ENCODE measurements at regions of chr13 and their contacts with region 1.

Region 1: DNA sequence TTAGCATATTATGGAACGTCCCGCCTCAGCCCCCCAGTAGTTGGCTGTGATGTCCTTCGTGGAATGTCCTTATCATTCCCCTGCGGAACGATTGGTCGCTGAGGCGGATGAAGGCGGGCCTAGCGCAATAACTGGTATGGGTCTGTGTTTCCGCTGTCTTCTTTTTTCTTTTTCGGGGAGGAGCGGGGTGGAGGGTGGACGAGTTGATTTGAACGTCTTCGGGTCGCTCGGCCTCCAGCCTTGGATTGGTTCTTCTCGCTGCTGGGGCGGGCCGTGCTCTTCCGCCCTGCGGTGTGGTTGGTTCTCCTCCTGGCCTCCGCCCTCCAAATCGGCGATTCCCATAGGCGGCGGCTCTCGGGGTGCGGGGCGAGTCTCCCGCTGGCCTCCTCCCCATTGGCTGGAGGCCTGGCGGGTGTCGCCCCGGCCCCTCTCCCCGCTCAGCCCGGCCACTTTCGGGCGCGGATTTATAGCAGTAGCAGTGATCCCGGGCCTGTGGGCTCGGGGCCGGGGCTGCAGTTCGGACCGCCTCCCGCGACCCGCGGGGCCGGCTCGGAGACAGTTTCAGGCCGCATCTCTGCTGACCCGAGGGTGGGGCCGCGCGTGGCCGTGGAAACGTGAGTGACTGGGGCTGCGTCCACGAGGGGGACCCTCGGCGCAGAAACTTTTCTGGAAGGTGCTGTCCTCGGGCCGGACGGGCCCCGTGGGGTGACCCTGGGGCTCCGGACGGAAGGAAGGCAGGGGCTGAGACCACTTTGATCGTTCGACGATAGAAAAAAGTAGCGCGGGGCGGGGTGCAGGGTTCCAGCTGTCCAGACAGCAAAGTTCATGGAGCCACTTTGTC is 2.1 kb downstream of the ING1 start:
- DNase-seq: peak; percentile 100
- H3K4me3 ChIP-seq: peak overlapping the region; percentile 91 to 97 (median 94)
- H3K27ac ChIP-seq: peak overlapping the region; percentile 96 to 100 (median 100)
- H3K4me1 ChIP-seq: peaks cover 0 to 39% (median 31%) of the 10 kb centered on the region in 4 donors
- H3K27me3 ChIP-seq: no peaks in the 10 kb centered on the region
- CTCF ChIP-seq: peak in 2 of 4 experiments; percentile 14 to 23
- EP300 ChIP-seq: peak in 2 of 4 donors; percentile 45 to 50
- POLR2A ChIP-seq: peak; percentile 91 to 95

Region 2: DNA sequence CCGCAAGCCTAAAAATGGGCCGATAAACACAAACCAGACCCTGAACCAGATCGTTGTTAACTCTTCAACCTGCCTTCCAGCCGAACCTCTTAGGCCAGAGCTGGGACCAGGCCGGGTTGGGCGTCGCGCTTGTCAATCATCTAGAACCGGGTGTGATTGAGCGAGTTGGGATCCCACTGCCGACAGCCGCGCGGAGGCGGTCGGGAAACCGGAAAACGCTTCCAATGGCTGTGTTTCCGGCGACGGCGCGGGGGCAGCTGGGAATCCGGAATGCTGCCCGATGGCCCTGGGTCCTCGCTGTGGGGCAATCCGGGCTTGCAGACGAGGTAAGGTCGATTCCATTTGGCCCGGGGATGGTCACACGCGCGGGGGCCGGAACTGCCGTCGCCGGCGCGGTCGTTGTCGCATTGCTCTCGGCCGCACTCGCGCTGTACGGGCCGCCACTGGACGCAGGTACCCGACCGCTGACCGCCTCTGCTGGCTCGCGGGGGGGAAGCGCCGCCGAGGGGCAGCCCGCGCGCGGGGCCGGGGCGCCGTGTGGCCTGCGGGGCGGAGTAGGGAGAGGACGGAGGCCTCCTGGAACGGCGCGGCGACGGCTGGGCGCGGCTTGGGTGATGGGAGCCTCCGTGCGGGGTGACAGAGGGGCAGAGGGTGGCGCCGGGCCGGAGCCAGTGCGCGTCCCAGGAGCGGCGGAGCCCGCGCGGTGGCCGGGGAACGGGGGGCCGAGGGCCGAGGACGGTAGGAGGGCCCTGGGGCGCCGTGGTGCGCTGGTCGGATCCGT is 100.1 kb before region 1 on chr13 and contains the start of gene NAXD:
- intact Hi-C with region 1: loop called (anchors 1 kb)
- DNase-seq: peak; percentile 97
- H3K4me3 ChIP-seq: peak within 1 kb of the TSS; percentile 80 to 93 (median 81)
- H3K27ac ChIP-seq: peak within 1 kb of the TSS; percentile 94 to 97 (median 96)
- H3K4me1 ChIP-seq: peaks cover 0 to 50% (median 46%) of the 10 kb centered on the region in 4 donors
- H3K27me3 ChIP-seq: no peaks in the 10 kb centered on the region
- CTCF ChIP-seq: no peak
- EP300 ChIP-seq: peak in 1 of 4 donors; percentile 82
- POLR2A ChIP-seq: peak; percentile 35 to 50
- total RNA-seq, gene NAXD: 33.5 to 41.1 (median 37.2) TPM

Region 3: GRCh38 chr13:110665491-110666254 is 49.9 kb before region 1 on chr13:
- intact Hi-C with region 1: no loop called
- DNase-seq: no peak
- H3K4me3 ChIP-seq: no peak overlapping the region
- H3K27ac ChIP-seq: no peak overlapping the region
- H3K4me1 ChIP-seq: no peaks in the 10 kb centered on the region
- H3K27me3 ChIP-seq: no peaks in the 10 kb centered on the region
- CTCF ChIP-seq: no peak
- EP300 ChIP-seq: no peak
- POLR2A ChIP-seq: no peak

Region 4: GRCh38 chr13:110812121-110812868 is 96.7 kb after region 1 on chr13:
- intact Hi-C with region 1: loop called (anchors 5 kb)
- DNase-seq: no peak
- H3K4me3 ChIP-seq: peak overlapping the region in 3 of 4 donors; percentile 7 to 25 (median 25)
- H3K27ac ChIP-seq: no peak overlapping the region
- H3K4me1 ChIP-seq: peaks cover 0 to 30% (median 13%) of the 10 kb centered on the region in 4 donors
- H3K27me3 ChIP-seq: peaks cover 0 to 28% (median 13%) of the 10 kb centered on the region in 3 donors
- CTCF ChIP-seq: no peak
- EP300 ChIP-seq: no peak
- POLR2A ChIP-seq: no peak

Region 5: DNA sequence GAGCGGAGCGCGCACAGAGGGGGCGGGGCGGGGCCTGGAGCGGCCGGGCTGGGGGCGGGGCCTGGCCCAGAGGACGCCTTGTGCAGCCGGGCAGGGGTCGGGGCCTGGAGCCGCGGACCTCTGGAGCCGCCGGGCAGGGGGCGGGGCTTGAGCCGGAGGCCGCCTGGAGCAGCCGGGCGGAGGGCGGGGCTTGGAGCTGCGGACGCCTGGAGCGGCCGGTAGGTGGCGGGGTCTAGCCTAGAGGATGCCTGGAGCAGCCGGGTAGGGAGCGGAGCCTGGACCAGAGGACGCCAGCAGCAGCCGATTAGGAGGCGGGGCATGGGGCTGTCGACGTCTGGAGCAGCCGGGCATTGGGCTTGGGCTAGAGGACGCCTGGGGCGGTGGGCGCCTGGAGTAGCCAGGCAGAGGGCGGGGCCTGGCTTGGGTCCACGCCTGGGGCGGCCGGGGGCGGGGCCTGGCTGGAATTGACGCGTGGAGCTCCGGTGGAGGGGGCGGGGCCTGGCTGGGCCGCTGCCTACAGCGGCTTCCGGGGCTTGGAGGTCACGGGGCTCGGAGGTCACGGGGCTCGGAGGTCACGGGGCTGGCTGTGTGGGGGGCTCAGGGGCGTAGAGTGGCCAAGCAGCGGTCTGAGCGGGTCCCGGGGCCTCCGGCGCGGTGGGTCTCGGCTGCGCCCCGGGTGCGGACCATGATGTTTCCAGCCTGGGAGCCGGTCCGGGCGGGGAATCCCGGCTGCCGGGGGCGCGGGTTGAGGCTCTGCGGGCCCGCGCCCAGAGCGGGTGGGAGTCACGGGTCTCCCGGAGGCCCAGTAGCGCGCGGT is 199.7 kb after region 1 on chr13 and contains the start of gene ANKRD10:
- intact Hi-C with region 1: loop called (anchors 1 kb)
- DNase-seq: peak; percentile 99
- H3K4me3 ChIP-seq: peak within 1 kb of the TSS; percentile 78 to 98 (median 80)
- H3K27ac ChIP-seq: peak within 1 kb of the TSS; percentile 98 to 100 (median 100)
- H3K4me1 ChIP-seq: peaks cover 0 to 44% (median 38%) of the 10 kb centered on the region in 4 donors
- H3K27me3 ChIP-seq: no peaks in the 10 kb centered on the region
- CTCF ChIP-seq: peak; percentile 74 to 86 (median 84)
- EP300 ChIP-seq: peak in 1 of 4 donors; percentile 44
- POLR2A ChIP-seq: peak in 1 of 2 donors; percentile 51
- total RNA-seq, gene ANKRD10: 141 to 179 (median 150) TPM

Region 6: GRCh38 chr13:111184458-111185401 is 469.1 kb after region 1 on chr13:
- intact Hi-C with region 1: no loop called
- DNase-seq: no peak
- H3K4me3 ChIP-seq: no peak overlapping the region
- H3K27ac ChIP-seq: peak overlapping the region; percentile 13 to 52 (median 26)
- H3K4me1 ChIP-seq: peaks cover 0 to 49% (median 39%) of the 10 kb centered on the region in 4 donors
- H3K27me3 ChIP-seq: no peaks in the 10 kb centered on the region
- CTCF ChIP-seq: no peak
- EP300 ChIP-seq: no peak
- POLR2A ChIP-seq: no peak

Region 7: GRCh38 chr13:111216166-111216960 is 500.7 kb after region 1 on chr13:
- intact Hi-C with region 1: loop called (anchors 10 kb)
- DNase-seq: no peak
- H3K4me3 ChIP-seq: no peak overlapping the region
- H3K27ac ChIP-seq: peak overlapping the region in 1 of 4 donors; percentile 48
- H3K4me1 ChIP-seq: peaks cover 0 to 56% (median 41%) of the 10 kb centered on the region in 4 donors
- H3K27me3 ChIP-seq: no peaks in the 10 kb centered on the region
- CTCF ChIP-seq: peak in 1 of 4 experiments; percentile 29
- EP300 ChIP-seq: no peak
- POLR2A ChIP-seq: no peak